Stomach (tissue), 19 donors: ENCODE measurements at regions of chr6 and their contacts with region 1.

Region 1: DNA sequence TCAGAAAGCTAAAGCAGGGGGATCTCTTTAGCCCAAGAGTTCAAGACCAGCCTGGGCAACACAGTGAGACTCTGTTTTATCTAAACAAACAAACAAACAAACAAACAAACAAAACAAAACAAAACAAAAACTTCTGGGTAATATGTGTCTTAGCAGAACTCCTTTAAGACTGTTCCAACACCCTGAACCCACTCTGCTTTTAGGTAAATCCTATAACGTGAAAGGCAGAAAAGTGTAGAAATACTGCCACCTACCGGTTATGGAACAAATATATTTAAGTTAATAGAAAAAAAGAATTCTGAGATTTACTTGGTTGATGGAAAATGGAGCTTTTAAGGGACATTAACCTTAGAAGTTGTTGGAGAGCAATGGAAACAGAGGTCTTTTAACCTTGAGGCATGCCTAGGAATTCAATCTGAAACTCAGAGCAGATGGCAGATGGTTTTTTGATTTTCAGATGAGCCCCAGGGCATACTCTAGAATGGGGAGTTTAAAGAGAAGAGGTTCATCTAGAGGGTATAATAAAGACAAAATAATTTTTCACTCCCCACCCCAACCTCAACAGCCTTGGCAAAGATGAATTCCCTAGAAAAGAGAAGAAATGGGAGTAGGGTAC is 38.5 kb downstream of the SOD2 start:
- DNase-seq: peak in 1 of 2 donors; percentile 76
- H3K4me3 ChIP-seq: no peak overlapping the region
- H3K27ac ChIP-seq: no peak overlapping the region
- H3K4me1 ChIP-seq: no peaks in the 10 kb centered on the region
- H3K27me3 ChIP-seq: no peaks in the 10 kb centered on the region
- CTCF ChIP-seq: peak in 4 of 7 experiments; percentile 31 to 68 (median 48)
- EP300 ChIP-seq: no peak
- POLR2A ChIP-seq: no peak

Region 2: DNA sequence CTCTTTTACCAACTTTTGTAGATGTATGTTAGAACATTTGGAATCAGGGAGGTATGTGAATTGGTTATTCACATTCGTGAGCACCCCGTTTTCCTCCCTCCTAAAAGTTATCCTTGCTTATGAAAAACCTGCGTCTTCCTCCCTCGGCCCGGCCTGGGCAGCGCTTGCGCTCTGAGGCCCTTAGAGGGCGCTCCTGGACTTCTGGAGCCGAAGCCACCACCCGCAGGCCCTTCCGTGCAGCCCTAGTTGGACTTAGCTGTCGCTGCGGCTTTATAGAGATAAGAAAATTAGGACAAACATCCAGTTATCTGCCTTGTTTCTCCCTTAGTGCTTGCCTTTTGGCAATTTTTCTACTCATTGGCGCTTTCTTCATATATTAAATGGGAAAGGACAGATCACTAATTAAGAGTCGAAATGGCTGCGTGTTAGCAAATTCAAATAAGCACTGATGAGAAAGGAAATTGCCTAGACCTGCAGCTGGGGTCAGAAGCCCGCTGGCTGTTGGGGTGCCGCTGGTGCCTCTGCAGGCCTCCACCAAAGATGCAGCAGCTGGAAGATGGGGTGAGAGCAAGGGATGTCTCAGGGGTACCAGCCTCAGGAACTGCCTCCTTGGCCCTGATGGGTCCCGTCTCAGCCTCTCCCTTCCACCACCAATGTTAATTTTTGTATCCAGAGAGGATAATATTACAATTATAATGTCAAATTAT is 480.2 kb before region 1 on chr6:
- intact Hi-C with region 1: loop called (anchors 10 kb)
- DNase-seq: peak; percentile 75 to 89
- H3K4me3 ChIP-seq: no peak overlapping the region
- H3K27ac ChIP-seq: no peak overlapping the region
- H3K4me1 ChIP-seq: peaks cover 9 to 24% (median 15%) of the 10 kb centered on the region in 4 donors
- H3K27me3 ChIP-seq: peaks cover 3 to 61% (median 37%) of the 10 kb centered on the region in 3 donors
- CTCF ChIP-seq: peak in 5 of 7 experiments; percentile 52 to 81 (median 74)
- EP300 ChIP-seq: no peak
- POLR2A ChIP-seq: no peak